ENCODE measurements at regions of chr9 and their contacts with region 1.

Region 1: DNA sequence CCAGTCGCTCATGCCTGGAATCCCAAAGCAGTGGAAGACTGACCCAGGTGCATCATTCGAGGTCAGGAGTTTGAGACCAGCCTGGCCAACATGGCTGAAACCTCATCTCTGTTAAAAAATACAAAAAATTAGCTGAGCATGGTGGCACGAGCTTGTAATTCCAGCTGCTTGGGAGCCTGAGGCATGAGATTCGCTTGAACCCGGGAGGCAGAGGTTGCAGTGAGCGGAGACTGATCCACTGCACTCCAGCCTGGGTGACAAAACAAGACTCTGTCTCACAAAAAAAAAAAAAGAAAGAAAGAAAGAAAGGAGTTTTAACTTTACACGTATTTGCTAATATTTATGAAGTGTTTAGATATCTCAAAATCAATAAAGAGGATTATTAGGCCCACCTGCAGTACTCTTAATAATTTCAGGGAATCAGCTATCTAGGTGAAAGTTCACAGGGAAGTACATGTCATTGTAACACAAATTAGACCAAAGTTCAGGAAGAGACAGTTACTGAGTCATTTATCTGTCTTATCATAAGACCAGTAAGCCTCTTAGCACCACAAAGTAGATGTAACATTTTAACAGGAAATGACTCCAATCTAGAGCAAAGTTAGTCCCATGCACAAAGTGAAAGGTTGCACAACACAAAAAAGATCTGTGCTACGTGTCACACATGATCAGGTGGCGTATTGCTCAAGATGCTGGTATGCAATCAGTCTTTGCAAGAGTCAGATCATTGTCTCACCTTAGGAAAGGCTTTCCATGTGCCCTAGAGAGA is 34.1 kb upstream of the PLIN2 start:
- DNase-seq: peak; percentile 84 to 87
- H3K4me3 ChIP-seq: no peak overlapping the region
- H3K4me3 Mint-ChIP-seq: no peak overlapping the region
- H3K27ac Mint-ChIP-seq: peak overlapping the region; percentile 82
- H3K4me1 ChIP-seq: peaks cover 35% of the 10 kb centered on the region
- H3K4me1 Mint-ChIP-seq: no peaks in the 10 kb centered on the region
- H3K27me3 ChIP-seq: no peaks in the 10 kb centered on the region
- H3K27me3 Mint-ChIP-seq: no peaks in the 10 kb centered on the region
- CTCF ChIP-seq: no peak

Region 2: GRCh38 chr9:19127881-19128500 is 33.5 kb before region 1 on chr9:
- CTCF ChIA-PET with region 1: no interaction called
- POLR2A ChIA-PET with region 1: no interaction called
- intact Hi-C with region 1: loop called (anchors 2 kb)
- DNase-seq: peak; percentile 38
- H3K4me3 ChIP-seq: peak overlapping the region; percentile 53
- H3K4me3 Mint-ChIP-seq: peak overlapping the region; percentile 79
- H3K27ac Mint-ChIP-seq: peak overlapping the region; percentile 85
- H3K4me1 ChIP-seq: peaks cover 15% of the 10 kb centered on the region
- H3K4me1 Mint-ChIP-seq: peaks cover 8% of the 10 kb centered on the region
- H3K27me3 ChIP-seq: no peaks in the 10 kb centered on the region
- H3K27me3 Mint-ChIP-seq: no peaks in the 10 kb centered on the region
- CTCF ChIP-seq: no peak

Region 3: GRCh38 chr9:19184144-19184917 is 22.9 kb after region 1 on chr9:
- CTCF ChIA-PET with region 1: no interaction called
- POLR2A ChIA-PET with region 1: no interaction called
- intact Hi-C with region 1: no loop called
- DNase-seq: peak; percentile 46 to 69
- H3K4me3 ChIP-seq: no peak overlapping the region
- H3K4me3 Mint-ChIP-seq: peak overlapping the region; percentile 29
- H3K27ac Mint-ChIP-seq: peak overlapping the region; percentile 89
- H3K4me1 ChIP-seq: peaks cover 26% of the 10 kb centered on the region
- H3K4me1 Mint-ChIP-seq: no peaks in the 10 kb centered on the region
- H3K27me3 ChIP-seq: no peaks in the 10 kb centered on the region
- H3K27me3 Mint-ChIP-seq: no peaks in the 10 kb centered on the region
- CTCF ChIP-seq: no peak